ENCODE measurements at regions of chrX and their contacts with region 1.

Region 1: GRCh38 chrX:78945186-78945912 is at the start of gene P2RY10:
- DNase-seq: peak; percentile 78
- H3K4me3 Mint-ChIP-seq: peak within 1 kb of the TSS; percentile 98
- H3K27ac Mint-ChIP-seq: peak within 1 kb of the TSS; percentile 98
- H3K4me1 Mint-ChIP-seq: peaks cover 34% of the 10 kb centered on the region
- H3K27me3 Mint-ChIP-seq: no peaks in the 10 kb centered on the region
- total RNA-seq, gene P2RY10: 34.1 and 38.8 TPM in 2 replicates

Region 2: GRCh38 chrX:78103623-78104446 is 841.5 kb before region 1 on chrX and contains the start of gene PGK1:
- intact Hi-C with region 1: loop called (anchors 10 kb)
- DNase-seq: peak; percentile 98
- H3K4me3 Mint-ChIP-seq: peak within 1 kb of the TSS; percentile 97
- H3K27ac Mint-ChIP-seq: peak within 1 kb of the TSS; percentile 91
- H3K4me1 Mint-ChIP-seq: peaks cover 25% of the 10 kb centered on the region
- H3K27me3 Mint-ChIP-seq: no peaks in the 10 kb centered on the region
- total RNA-seq, gene PGK1: 1,039 and 1,063 TPM in 2 replicates

Region 3: DNA sequence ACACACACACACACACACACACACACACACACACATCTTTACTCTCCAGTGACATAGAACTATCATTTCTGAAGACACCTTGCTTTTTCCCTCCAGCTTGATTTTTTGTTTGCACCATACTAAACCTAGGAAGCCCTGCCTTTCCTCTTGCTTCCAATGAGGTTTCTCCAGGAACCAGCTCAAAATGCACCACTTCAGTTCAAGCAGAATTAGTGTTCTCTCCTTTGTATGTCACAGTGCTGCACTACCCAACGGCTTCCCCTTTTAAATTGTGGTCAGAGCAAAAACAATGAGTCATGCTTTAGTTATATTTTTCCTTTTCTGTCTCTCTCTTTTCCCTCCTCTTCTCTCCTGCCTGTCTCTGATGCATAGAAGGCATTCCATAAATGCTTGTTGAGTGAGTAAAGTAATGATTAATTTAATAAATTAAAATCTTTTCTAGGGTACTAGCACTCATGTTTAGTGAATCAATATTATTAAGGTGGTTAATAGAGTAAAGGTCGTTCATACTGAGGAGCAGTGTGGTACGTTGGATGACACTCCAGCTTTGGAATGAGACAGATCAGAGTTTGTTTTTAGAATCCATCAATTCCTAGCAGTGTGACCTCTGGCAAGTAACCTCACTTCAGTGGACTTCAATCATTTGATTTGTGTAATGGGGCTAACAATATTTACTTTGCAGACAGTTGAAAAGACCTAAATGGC is 292.1 kb before region 1 on chrX:
- intact Hi-C with region 1: loop called (anchors 10 kb)
- DNase-seq: peak; percentile 63
- H3K4me3 Mint-ChIP-seq: peak overlapping the region; percentile 76
- H3K27ac Mint-ChIP-seq: peak overlapping the region; percentile 79
- H3K4me1 Mint-ChIP-seq: peaks cover 19% of the 10 kb centered on the region
- H3K27me3 Mint-ChIP-seq: no peaks in the 10 kb centered on the region

Region 4: DNA sequence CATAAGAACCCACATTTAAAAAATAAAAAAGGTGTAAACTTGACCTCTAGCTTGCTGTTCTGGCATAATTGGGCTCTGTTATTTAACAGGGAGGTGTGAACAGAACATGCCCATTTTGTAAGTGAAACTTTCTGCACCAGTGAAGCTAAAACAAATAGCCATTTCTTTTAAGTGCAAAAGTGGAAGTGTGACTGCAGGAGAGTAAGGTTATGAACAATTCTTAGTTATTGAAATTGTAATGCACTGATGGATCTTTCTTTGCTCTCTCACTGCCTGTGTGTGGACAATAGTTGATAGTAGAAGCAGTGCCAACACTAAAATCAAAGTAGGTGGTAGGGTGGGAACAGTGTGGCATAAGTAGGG is 12.4 kb after region 1 on chrX:
- intact Hi-C with region 1: loop called (anchors 1 kb)
- DNase-seq: no peak
- H3K4me3 Mint-ChIP-seq: peak overlapping the region; percentile 29
- H3K27ac Mint-ChIP-seq: peak overlapping the region; percentile 73
- H3K4me1 Mint-ChIP-seq: peaks cover 44% of the 10 kb centered on the region
- H3K27me3 Mint-ChIP-seq: no peaks in the 10 kb centered on the region

Region 5: DNA sequence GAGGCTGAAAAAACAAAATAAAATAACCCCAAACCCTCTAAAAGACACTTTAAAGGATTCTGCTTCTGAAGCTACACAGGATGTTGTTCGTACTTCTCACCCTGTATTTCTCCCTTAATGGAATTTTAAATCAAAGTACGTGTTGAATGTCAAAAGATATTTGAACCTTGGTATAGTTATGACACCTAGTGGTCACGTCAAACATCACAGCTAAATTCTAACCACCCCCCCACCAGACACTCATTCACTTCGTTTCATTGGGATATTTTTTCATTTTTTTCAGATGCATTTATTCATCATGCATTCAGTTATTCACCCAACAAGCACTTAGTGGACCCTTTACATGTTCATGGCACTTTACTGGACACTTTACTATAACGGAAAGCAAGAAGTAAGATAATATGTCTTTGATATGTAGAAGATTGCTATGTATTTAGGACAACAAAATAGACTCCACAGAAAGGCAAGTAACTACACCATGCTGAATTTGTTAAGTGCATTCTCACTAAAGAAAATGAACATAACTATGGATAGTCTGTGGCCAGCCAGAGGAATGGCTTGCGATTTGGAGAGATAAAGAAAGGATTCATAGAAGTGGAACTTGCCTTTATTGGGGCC is 136.7 kb after region 1 on chrX:
- intact Hi-C with region 1: loop called (anchors 5 kb)
- DNase-seq: peak; percentile 78
- H3K4me3 Mint-ChIP-seq: peak overlapping the region; percentile 78
- H3K27ac Mint-ChIP-seq: peak overlapping the region; percentile 87
- H3K4me1 Mint-ChIP-seq: peaks cover 14% of the 10 kb centered on the region
- H3K27me3 Mint-ChIP-seq: no peaks in the 10 kb centered on the region

Region 6: DNA sequence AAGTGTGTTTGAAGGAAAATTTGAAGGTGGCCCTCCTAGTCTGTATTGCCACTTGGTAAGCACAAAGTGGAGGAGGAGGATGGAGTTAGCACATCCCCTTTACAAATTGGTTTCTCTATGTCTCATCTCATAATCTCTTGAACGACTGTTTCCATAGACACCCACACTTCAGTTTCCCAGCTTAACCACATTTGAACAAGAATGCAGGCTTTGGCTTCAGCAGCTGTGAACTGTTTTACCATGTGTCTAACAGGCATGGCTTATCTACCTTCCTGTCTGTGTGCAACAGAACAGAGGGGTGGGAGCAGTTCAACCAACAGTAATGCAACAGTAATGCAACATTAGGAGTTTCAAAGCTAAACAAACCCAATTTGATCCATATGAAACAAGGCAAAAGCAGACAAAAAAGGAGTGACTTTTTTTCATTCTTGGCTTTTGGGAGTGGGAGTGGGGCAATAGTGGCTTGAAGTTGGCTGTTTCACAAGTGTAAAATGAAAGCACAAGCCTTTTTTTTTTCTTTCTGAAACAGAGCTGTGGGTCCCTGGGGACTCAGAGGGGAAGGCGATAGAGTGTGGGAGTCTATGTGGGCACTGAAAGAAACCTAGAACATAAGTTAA is 313.8 kb after region 1 on chrX:
- intact Hi-C with region 1: loop called (anchors 2 kb)
- DNase-seq: peak; percentile 89
- H3K4me3 Mint-ChIP-seq: peak overlapping the region; percentile 75
- H3K27ac Mint-ChIP-seq: peak overlapping the region; percentile 93
- H3K4me1 Mint-ChIP-seq: peaks cover 52% of the 10 kb centered on the region
- H3K27me3 Mint-ChIP-seq: no peaks in the 10 kb centered on the region